A549 (cell line): ENCODE measurements at regions of chr3 and their contacts with region 1.

Region 1: GRCh38 chr3:11846281-11847034 is at the start of gene TAMM41:
- DNase-seq: peak; percentile 93 to 96
- ATAC-seq: peak; percentile 100
- H3K4me3 ChIP-seq: peak within 1 kb of the TSS; percentile 94
- H3K27ac ChIP-seq: peak within 1 kb of the TSS; percentile 88 to 93
- H3K4me1 ChIP-seq: peaks cover 15% of the 10 kb centered on the region; the same call in 2 of the 3 replicates
- CTCF ChIP-seq: peak; percentile 73
- EP300 ChIP-seq: no peak
- POLR2A ChIP-seq: peak; percentile 96
- RAD21 ChIP-seq: no peak
- polyA plus RNA-seq, gene TAMM41: 16.8 and 17.5 TPM in 2 replicates

Region 2: GRCh38 chr3:11757441-11757875 is 89.0 kb before region 1 on chr3:
- CTCF ChIA-PET with region 1: no interaction called
- POLR2A ChIA-PET with region 1: no interaction called
- DNase-seq: peak in 1 of 2 experiments; percentile 23
- ATAC-seq: peak in 1 of 2 experiments; percentile 65; a peak in 3 of 6 replicates
- H3K4me3 ChIP-seq: no peak overlapping the region
- H3K27ac ChIP-seq: no peak overlapping the region
- H3K4me1 ChIP-seq: no peaks in the 10 kb centered on the region
- CTCF ChIP-seq: no peak
- EP300 ChIP-seq: no peak
- POLR2A ChIP-seq: no peak
- RAD21 ChIP-seq: no peak

Region 3: GRCh38 chr3:11774294-11774877 is 72.1 kb before region 1 on chr3:
- CTCF ChIA-PET with region 1: no interaction called
- POLR2A ChIA-PET with region 1: no interaction called
- DNase-seq: peak; percentile 62 to 74
- ATAC-seq: peak; percentile 89 to 92
- H3K4me3 ChIP-seq: no peak overlapping the region
- H3K27ac ChIP-seq: no peak overlapping the region
- H3K4me1 ChIP-seq: peaks cover 11% of the 10 kb centered on the region; the same call in 2 of the 3 replicates
- CTCF ChIP-seq: peak; percentile 36
- EP300 ChIP-seq: no peak
- POLR2A ChIP-seq: no peak
- RAD21 ChIP-seq: peak; percentile 18 to 44; a peak in 2 of 5 replicates

Region 4: DNA sequence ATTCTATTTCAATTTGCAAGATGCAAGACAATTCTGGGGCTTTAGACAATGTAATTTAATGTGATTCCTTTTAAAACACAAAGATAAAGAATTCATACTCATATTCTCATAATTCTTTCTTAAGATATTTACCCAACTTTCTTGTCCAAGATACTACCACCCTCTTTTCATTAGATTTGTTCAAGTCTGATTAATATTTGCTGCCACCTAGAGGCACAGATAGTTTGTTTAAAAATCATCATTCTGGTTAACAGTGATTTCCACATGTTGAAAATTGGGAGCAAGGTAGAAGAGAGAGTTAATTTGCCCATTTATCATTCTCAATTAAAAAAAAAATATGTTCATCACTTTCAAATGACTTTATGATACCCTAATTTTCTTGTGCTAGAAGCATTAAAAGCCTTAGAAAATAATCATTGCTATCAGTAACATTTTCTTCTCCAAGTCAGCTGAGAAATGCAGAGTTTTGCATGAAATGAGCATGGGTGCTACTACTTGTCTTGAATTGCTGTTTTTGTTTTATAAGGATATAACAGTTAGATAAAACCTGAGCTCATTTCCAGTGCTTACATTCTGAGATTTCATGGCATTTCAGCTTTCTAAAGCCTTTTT is 11.3 kb before region 1 on chr3:
- CTCF ChIA-PET with region 1: interaction called, 14 read pairs
- POLR2A ChIA-PET with region 1: no interaction called
- DNase-seq: peak; percentile 30 to 38
- ATAC-seq: peak in 1 of 2 experiments; percentile 67; a peak in 3 of 6 replicates
- H3K4me3 ChIP-seq: no peak overlapping the region
- H3K27ac ChIP-seq: no peak overlapping the region
- H3K4me1 ChIP-seq: no peaks in the 10 kb centered on the region
- CTCF ChIP-seq: peak; percentile 59
- EP300 ChIP-seq: no peak
- POLR2A ChIP-seq: no peak
- RAD21 ChIP-seq: peak; percentile 58 to 59

Region 5: GRCh38 chr3:11976976-11977375 is 130.5 kb after region 1 on chr3:
- CTCF ChIA-PET with region 1: no interaction called
- POLR2A ChIA-PET with region 1: no interaction called
- DNase-seq: no peak
- ATAC-seq: no peak
- H3K4me3 ChIP-seq: no peak overlapping the region
- H3K27ac ChIP-seq: no peak overlapping the region
- H3K4me1 ChIP-seq: no peaks in the 10 kb centered on the region
- CTCF ChIP-seq: no peak
- EP300 ChIP-seq: no peak
- POLR2A ChIP-seq: no peak
- RAD21 ChIP-seq: no peak

Region 6: GRCh38 chr3:12495749-12496452 is 649.4 kb after region 1 on chr3:
- CTCF ChIA-PET with region 1: no interaction called
- POLR2A ChIA-PET with region 1: no interaction called
- DNase-seq: no peak
- ATAC-seq: peak in 1 of 2 experiments; percentile 61; a peak in 3 of 6 replicates
- H3K4me3 ChIP-seq: no peak overlapping the region
- H3K27ac ChIP-seq: no peak overlapping the region
- H3K4me1 ChIP-seq: no peaks in the 10 kb centered on the region
- CTCF ChIP-seq: 0 out of 3 replicates have a peak, but pooled peaks have one; percentile 17
- EP300 ChIP-seq: no peak
- POLR2A ChIP-seq: no peak
- RAD21 ChIP-seq: no peak